Activated CD4-positive, alpha-beta T cell treated with anti-CD3 and anti-CD28 coated beads for 36 hours (primary cell): ENCODE measurements at regions of chr1 and their contacts with region 1.

Region 1: DNA sequence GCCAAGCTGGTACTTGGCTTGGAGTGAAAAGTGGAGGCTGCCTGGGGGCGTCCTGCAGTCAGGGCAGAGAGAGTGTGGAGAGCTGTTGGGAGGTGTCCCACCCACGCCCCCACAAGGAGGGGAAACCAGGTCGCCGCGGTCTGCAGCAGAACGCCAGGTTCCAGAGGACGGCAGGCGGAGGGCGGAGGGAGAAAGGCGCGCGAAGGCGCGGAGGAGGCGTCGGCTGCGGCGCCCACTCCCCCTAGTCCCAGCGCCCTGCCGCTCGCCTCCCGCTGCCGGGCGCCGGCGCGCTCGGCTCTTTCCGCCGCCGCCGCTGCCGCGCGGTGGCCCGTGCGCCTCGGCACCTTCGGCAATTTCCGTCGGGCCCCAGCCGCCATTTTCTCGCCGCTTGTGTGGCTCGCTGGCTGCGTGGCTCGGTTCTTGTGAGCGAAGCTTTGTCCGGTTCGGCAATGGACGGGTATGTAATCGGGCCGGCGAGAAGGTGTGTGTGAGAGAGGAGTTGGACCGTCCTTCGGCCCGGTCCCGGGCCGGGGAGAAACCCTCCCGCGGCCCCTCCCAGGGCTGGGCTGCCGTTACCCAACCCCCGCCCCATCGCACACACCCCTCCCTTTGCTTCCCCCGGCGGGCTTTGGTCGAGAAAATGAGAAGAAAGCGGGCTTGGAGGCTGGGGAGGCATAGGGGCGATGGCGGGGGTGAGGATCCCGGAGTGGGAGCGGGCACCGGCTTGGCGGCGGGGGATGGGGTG is at the start of gene PTBP2:
- DNase-seq: peak; percentile 90
- ATAC-seq: peak; percentile 95
- H3K4me3 Mint-ChIP-seq: peak within 1 kb of the TSS; percentile 95
- H3K27ac Mint-ChIP-seq: peak within 1 kb of the TSS; percentile 81
- H3K4me1 Mint-ChIP-seq: peaks cover 22% of the 10 kb centered on the region
- H3K27me3 Mint-ChIP-seq: no peaks in the 10 kb centered on the region
- total RNA-seq, gene PTBP2: 13.5 to 14.8 TPM

Region 2: GRCh38 chr1:96771847-96772246 is 50.3 kb after region 1 on chr1:
- CTCF ChIA-PET with region 1: no interaction called
- POLR2A ChIA-PET with region 1: interaction called, 13 read pairs
- intact Hi-C with region 1: no loop called
- DNase-seq: no peak
- ATAC-seq: no peak
- H3K4me3 Mint-ChIP-seq: no peak overlapping the region
- H3K27ac Mint-ChIP-seq: no peak overlapping the region
- H3K4me1 Mint-ChIP-seq: no peaks in the 10 kb centered on the region
- H3K27me3 Mint-ChIP-seq: no peaks in the 10 kb centered on the region

Region 3: DNA sequence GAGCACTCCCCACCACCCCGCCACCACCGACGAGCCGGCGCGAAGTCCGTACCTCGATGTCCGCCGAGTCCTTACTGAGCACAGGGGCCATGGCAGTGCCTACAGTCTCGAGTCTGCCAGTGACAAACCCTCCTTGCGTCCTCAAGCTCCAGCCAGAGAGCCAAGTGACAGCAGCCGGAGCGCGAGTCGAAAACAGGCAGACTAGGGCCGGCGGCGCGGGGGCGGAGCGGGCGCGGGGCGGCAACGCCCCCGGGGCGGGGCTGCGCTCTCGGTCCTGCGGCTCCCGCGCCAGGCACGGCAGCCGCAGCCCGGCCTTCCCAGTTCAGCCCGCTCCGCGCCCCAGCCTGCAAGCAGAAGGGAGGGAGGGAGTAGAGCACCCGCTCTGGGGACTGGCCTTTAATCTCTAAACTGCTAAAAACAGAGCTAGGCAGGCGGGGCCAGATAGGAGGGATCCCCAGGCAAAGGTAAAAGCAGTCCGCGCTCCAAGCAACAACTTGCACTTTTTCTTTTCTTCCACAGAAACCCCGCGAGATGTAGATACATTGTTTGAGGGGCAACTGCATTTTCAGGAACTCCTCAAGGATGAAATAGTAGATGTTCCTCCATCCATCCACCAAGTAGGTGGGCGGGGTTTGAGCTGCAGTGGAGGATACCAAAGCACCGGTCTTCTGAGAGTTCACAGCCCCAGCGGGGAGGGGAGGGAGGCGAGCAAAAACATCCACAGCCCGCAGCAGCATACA is 1199.4 kb after region 1 on chr1 and contains the start of gene DPYD:
- CTCF ChIA-PET with region 1: no interaction called
- POLR2A ChIA-PET with region 1: interaction called, 4 read pairs
- intact Hi-C with region 1: loop called in 1 of 2 experiments (anchors 10 kb)
- DNase-seq: peak; percentile 90
- ATAC-seq: peak; percentile 85
- H3K4me3 Mint-ChIP-seq: peak within 1 kb of the TSS; percentile 87
- H3K27ac Mint-ChIP-seq: peak within 1 kb of the TSS; percentile 90
- H3K4me1 Mint-ChIP-seq: peaks cover 43% of the 10 kb centered on the region
- H3K27me3 Mint-ChIP-seq: no peaks in the 10 kb centered on the region
- total RNA-seq, gene DPYD: 6.8 to 7.1 TPM